Activated CD4-positive, alpha-beta T cell treated with anti-CD3 and anti-CD28 coated beads for 36 hours (primary cell): ENCODE measurements at regions of chr4 and their contacts with region 1.

Region 1: GRCh38 chr4:8176547-8177399 is 18.2 kb upstream of the ABLIM2 start:
- DNase-seq: peak; percentile 68
- ATAC-seq: peak; percentile 95
- H3K4me3 Mint-ChIP-seq: no peak overlapping the region
- H3K27ac Mint-ChIP-seq: no peak overlapping the region
- H3K4me1 Mint-ChIP-seq: peaks cover 3% of the 10 kb centered on the region
- H3K27me3 Mint-ChIP-seq: peaks cover 3% of the 10 kb centered on the region

Region 2: GRCh38 chr4:8192748-8193738 is 16.3 kb after region 1 on chr4:
- CTCF ChIA-PET with region 1: interaction called, 14 read pairs
- POLR2A ChIA-PET with region 1: no interaction called
- intact Hi-C with region 1: no loop called
- DNase-seq: peak; percentile 60
- ATAC-seq: peak; percentile 68
- H3K4me3 Mint-ChIP-seq: no peak overlapping the region
- H3K27ac Mint-ChIP-seq: no peak overlapping the region
- H3K4me1 Mint-ChIP-seq: peaks cover 2% of the 10 kb centered on the region
- H3K27me3 Mint-ChIP-seq: no peaks in the 10 kb centered on the region

Region 3: DNA sequence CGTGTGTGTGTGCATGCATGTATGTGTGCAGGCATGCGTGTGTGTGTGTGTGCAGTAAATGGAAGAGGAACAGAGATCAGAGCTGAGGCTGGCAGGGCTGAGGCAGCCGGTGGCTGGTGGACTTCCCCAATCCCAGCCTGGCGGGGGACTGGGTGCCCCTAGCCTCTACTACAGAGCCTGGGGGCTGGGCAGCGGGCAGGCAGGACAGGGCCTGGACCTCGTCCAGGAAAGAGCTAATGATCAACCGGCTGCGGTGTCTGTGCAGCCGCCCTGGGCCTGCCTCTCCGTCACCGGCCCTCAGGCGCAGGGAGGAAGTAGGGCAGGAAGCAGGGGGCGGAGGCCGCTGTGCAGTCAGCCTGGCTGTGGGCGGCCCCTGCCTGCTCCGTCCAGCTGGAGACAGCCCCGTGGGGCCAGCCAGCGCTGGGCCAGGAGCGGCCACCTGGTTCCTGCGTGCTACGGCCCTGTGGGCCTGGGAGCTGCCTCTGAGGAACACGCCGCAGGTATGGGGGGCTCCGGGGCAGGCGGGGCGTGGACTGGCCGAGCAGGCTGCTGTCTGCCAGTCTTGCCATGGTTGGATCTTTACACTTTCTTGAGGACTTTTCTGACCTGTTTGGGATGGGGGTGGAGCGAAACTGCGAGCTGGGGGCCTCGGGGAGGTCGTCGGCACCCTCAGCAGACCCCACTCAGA is 22.3 kb after region 1 on chr4 and contains the start of gene SH3TC1:
- CTCF ChIA-PET with region 1: interaction called, 11 read pairs
- POLR2A ChIA-PET with region 1: no interaction called
- intact Hi-C with region 1: no loop called
- DNase-seq: peak; percentile 83
- ATAC-seq: peak; percentile 80
- H3K4me3 Mint-ChIP-seq: peak within 1 kb of the TSS; percentile 89
- H3K27ac Mint-ChIP-seq: peak within 1 kb of the TSS; percentile 94
- H3K4me1 Mint-ChIP-seq: peaks cover 38% of the 10 kb centered on the region
- H3K27me3 Mint-ChIP-seq: no peaks in the 10 kb centered on the region
- total RNA-seq, gene SH3TC1: 11.1 to 18.3 TPM

Region 4: GRCh38 chr4:8351931-8352367 is 175.2 kb after region 1 on chr4:
- CTCF ChIA-PET with region 1: no interaction called
- POLR2A ChIA-PET with region 1: no interaction called
- intact Hi-C with region 1: no loop called
- DNase-seq: no peak
- ATAC-seq: no peak
- H3K4me3 Mint-ChIP-seq: no peak overlapping the region
- H3K27ac Mint-ChIP-seq: no peak overlapping the region
- H3K4me1 Mint-ChIP-seq: no peaks in the 10 kb centered on the region
- H3K27me3 Mint-ChIP-seq: no peaks in the 10 kb centered on the region

Region 5: GRCh38 chr4:8403173-8403753 is 226.5 kb after region 1 on chr4:
- CTCF ChIA-PET with region 1: interaction called, 5 read pairs
- POLR2A ChIA-PET with region 1: no interaction called
- intact Hi-C with region 1: loop called (anchors 2 kb)
- DNase-seq: peak; percentile 75
- ATAC-seq: peak; percentile 74
- H3K4me3 Mint-ChIP-seq: no peak overlapping the region
- H3K27ac Mint-ChIP-seq: no peak overlapping the region
- H3K4me1 Mint-ChIP-seq: no peaks in the 10 kb centered on the region
- H3K27me3 Mint-ChIP-seq: no peaks in the 10 kb centered on the region